ENCODE measurements at regions of chrX and their contacts with region 1.

Region 1: GRCh38 chrX:105458846-105459245 is 238.4 kb upstream of the TEX13A start:
- DNase-seq: no peak
- ATAC-seq: no peak
- H3K4me3 ChIP-seq: no peak overlapping the region
- H3K27ac ChIP-seq: no peak overlapping the region
- H3K4me1 ChIP-seq: no peaks in the 10 kb centered on the region
- H3K27me3 ChIP-seq: no peaks in the 10 kb centered on the region
- CTCF ChIP-seq: no peak
- POLR2A ChIP-seq: no peak
- RAD21 ChIP-seq: no peak

Region 2: GRCh38 chrX:105424729-105425128 is 34.1 kb before region 1 on chrX:
- CTCF ChIA-PET with region 1: no interaction called
- POLR2A ChIA-PET with region 1: no interaction called
- dilution Hi-C with region 1: no loop called
- in situ Hi-C with region 1: no loop called
- intact Hi-C with region 1: loop called (anchors 1 kb)
- DNase-seq: no peak
- ATAC-seq: no peak
- H3K4me3 ChIP-seq: no peak overlapping the region
- H3K27ac ChIP-seq: no peak overlapping the region
- H3K4me1 ChIP-seq: no peaks in the 10 kb centered on the region
- H3K27me3 ChIP-seq: peaks cover 1% of the 10 kb centered on the region; the same call in 1 of the 2 replicates
- CTCF ChIP-seq: no peak
- POLR2A ChIP-seq: no peak
- RAD21 ChIP-seq: no peak

Region 3: GRCh38 chrX:105527759-105528158 is 68.9 kb after region 1 on chrX:
- CTCF ChIA-PET with region 1: no interaction called
- POLR2A ChIA-PET with region 1: no interaction called
- dilution Hi-C with region 1: no loop called
- in situ Hi-C with region 1: no loop called
- intact Hi-C with region 1: no loop called
- DNase-seq: no peak
- ATAC-seq: no peak
- H3K4me3 ChIP-seq: no peak overlapping the region
- H3K27ac ChIP-seq: no peak overlapping the region
- H3K4me1 ChIP-seq: no peaks in the 10 kb centered on the region
- H3K27me3 ChIP-seq: no peaks in the 10 kb centered on the region
- CTCF ChIP-seq: no peak
- POLR2A ChIP-seq: no peak
- RAD21 ChIP-seq: no peak

Region 4: DNA sequence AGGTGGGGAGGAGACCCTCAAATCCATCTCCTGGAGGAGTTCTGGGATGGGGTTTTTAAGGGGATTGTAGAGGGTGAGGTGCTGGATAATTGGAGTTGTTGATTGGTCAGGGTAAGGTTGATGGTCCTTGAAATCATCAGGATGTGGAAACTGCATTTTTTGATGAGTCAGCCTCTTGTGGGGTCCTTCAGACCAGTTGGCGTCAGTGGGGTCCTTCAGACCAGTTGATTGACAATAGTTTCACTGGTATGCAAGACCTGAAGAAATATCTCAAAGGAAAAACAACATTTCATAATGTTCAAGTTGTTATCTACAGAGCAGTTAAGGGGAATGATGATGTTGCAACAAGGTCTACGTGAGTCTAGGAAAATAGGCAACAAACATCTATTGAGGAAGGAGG is 451.8 kb after region 1 on chrX:
- CTCF ChIA-PET with region 1: no interaction called
- POLR2A ChIA-PET with region 1: no interaction called
- dilution Hi-C with region 1: no loop called
- in situ Hi-C with region 1: no loop called
- intact Hi-C with region 1: no loop called
- DNase-seq: no peak
- ATAC-seq: no peak
- H3K4me3 ChIP-seq: no peak overlapping the region
- H3K27ac ChIP-seq: no peak overlapping the region
- H3K4me1 ChIP-seq: no peaks in the 10 kb centered on the region
- H3K27me3 ChIP-seq: peaks cover 2% of the 10 kb centered on the region; the same call in 1 of the 2 replicates
- CTCF ChIP-seq: no peak
- POLR2A ChIP-seq: no peak
- RAD21 ChIP-seq: no peak

Measured in IMR-90 (cell line).